PC-3 (cell line): ENCODE measurements at regions of chr22 and their contacts with region 1.

Region 1: DNA sequence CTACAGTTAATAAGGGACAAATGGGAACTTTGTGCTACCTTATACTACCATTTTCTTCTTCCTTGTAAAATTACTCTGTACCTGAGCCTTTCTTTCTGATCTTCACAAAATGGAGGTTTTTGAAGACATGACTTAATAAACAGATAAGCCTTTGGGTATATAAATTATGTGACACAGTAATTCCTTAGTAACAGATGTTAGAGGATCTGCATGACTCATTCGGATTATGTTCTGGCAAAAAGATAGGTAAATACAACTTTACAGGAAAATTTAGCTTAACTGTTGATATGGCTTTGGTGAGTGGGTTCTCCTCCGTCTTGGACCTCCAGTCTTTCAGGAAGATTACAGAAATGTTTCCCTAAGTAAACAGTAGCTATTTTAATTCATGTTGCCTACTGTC is 61.8 kb downstream of the BID start:
- DNase-seq: peak; percentile 52
- ATAC-seq: peak; percentile 66
- H3K4me3 ChIP-seq: no peak overlapping the region
- H3K27ac ChIP-seq: peak overlapping the region; percentile 3; the same call in 1 of the 2 replicates
- H3K4me1 ChIP-seq: peaks cover 20% of the 10 kb centered on the region
- H3K27me3 ChIP-seq: no peaks in the 10 kb centered on the region
- CTCF ChIP-seq: no peak

Region 2: GRCh38 chr22:17672417-17672991 is 39.9 kb before region 1 on chr22:
- CTCF ChIA-PET with region 1: no interaction called
- POLR2A ChIA-PET with region 1: no interaction called
- intact Hi-C with region 1: loop called (anchors 5 kb)
- DNase-seq: peak; percentile 2
- ATAC-seq: peak; percentile 34
- H3K4me3 ChIP-seq: no peak overlapping the region
- H3K27ac ChIP-seq: peak overlapping the region; percentile 69
- H3K4me1 ChIP-seq: peaks cover 18% of the 10 kb centered on the region
- H3K27me3 ChIP-seq: no peaks in the 10 kb centered on the region
- CTCF ChIP-seq: no peak

Region 3: DNA sequence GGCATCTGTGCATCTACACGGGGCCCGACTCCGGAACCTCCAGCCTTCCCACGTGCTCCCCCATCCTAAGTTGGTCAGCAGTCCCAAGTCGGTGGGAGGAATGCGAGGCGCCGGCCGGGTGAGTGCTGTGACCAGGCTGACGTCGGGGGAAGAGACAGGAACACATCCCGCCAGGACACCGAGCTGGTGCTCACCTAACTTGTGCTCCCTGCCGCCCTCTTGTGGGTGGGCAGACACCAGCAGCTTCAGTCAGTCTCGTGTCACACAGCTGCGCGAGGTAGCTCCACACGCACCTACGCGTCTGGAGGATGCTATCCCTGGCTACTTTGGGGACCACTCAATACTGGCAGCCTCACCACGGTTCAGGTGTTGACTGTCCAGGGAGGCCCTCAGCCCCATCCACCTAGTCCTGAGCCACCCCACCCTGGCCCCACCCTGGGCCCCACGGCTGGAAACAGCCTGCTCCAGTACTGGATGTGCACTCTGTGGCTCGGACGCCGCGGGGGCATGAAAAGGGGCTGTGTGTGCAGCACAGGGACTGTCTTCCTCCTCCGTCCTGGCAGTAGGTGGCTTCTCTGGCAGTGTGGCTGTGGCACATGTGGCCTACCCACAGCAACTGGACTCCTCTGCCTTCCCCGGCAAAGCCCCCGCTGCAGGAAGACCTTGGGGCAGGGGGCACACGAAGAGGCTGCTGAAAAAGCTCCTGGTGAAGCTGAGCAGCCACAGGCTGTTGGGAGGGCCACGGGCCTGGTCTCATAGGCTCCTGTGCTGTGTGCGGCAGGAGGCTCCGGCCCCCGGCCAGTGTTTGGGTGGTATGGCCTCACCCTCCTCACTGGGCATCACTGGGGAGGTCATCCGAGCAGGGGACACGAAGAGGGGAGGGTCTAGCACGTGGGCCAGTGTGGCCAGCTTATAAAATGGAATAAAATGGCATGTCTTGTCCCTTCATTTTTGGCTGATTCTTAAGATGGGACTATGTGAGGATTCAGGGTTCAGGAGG is 73.0 kb after region 1 on chr22:
- CTCF ChIA-PET with region 1: no interaction called
- POLR2A ChIA-PET with region 1: no interaction called
- intact Hi-C with region 1: no loop called
- DNase-seq: peak; percentile 70
- ATAC-seq: peak; percentile 74
- H3K4me3 ChIP-seq: no peak overlapping the region
- H3K27ac ChIP-seq: no peak overlapping the region
- H3K4me1 ChIP-seq: peaks cover 10% of the 10 kb centered on the region
- H3K27me3 ChIP-seq: no peaks in the 10 kb centered on the region
- CTCF ChIP-seq: peak; percentile 66